WTC11 (cell line): ENCODE measurements at regions of chr19 and their contacts with region 1.

Region 1: GRCh38 chr19:40425450-40426287 is at the start of gene SERTAD1:
- DNase-seq: peak; percentile 100
- ATAC-seq: peak; percentile 89
- H3K4me3 Mint-ChIP-seq: peak within 1 kb of the TSS; percentile 91
- H3K27ac Mint-ChIP-seq: peak within 1 kb of the TSS; percentile 97
- H3K4me1 Mint-ChIP-seq: peaks cover 16% of the 10 kb centered on the region
- H3K27me3 Mint-ChIP-seq: peaks cover 3% of the 10 kb centered on the region; the same call in 1 of the 2 replicates
- CTCF ChIP-seq: peak; percentile 80
- total RNA-seq, gene SERTAD1: 6.8 to 8.6 TPM (median 7.4 TPM) in 3 replicates

Region 2: DNA sequence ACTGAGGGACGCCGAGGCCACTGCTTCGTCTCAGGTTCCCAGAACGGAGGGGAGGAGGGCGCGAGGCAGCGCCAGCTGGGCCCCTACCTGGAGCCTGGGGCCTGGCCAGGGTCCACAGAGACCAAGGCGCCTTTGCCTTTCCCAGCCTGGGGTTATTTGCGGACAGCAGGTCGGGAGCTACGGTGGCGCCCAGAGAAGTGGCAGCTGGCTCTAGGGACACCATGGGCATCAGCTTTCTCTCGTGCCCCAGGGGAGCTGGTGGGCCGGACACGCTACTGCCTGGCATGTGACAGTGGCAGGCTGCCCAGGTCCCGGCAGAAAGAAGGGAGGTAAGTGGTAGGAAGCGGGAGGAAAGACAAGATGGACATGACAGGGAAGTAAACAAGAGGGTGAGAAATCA is 159.6 kb before region 1 on chr19:
- CTCF ChIA-PET with region 1: no interaction called
- POLR2A ChIA-PET with region 1: no interaction called
- DNase-seq: no peak
- ATAC-seq: no peak
- H3K4me3 Mint-ChIP-seq: no peak overlapping the region
- H3K27ac Mint-ChIP-seq: no peak overlapping the region; the same call in 1 of the 2 replicates
- H3K4me1 Mint-ChIP-seq: peaks cover 20% of the 10 kb centered on the region
- H3K27me3 Mint-ChIP-seq: no peaks in the 10 kb centered on the region
- CTCF ChIP-seq: no peak

Region 3: DNA sequence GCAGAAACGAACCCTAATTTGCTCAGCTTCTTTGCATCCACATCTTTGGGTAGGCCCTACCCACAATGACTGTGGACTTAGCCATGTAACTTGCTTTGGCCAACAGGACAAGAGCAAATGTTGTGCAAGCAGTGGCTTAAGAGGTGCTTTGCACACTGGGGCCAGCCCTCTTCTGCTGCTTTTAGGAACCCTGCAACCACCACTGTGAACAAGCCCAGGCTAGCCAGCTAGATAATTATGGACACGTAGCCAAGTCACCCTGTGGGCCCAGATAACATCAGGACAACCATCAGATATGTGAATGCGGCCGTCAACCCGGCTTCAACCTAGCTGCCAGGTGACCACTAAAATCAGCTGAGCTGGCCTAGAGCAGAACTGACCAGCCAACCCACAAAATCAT is 94.6 kb before region 1 on chr19:
- CTCF ChIA-PET with region 1: no interaction called
- POLR2A ChIA-PET with region 1: no interaction called
- DNase-seq: no peak
- ATAC-seq: no peak
- H3K4me3 Mint-ChIP-seq: no peak overlapping the region
- H3K27ac Mint-ChIP-seq: no peak overlapping the region
- H3K4me1 Mint-ChIP-seq: no peaks in the 10 kb centered on the region
- H3K27me3 Mint-ChIP-seq: no peaks in the 10 kb centered on the region
- CTCF ChIP-seq: no peak

Region 4: GRCh38 chr19:40365613-40366401 is 59.9 kb before region 1 on chr19:
- CTCF ChIA-PET with region 1: interaction called, 21 read pairs
- POLR2A ChIA-PET with region 1: interaction called, 6 read pairs
- DNase-seq: peak; percentile 89
- ATAC-seq: peak; percentile 82
- H3K4me3 Mint-ChIP-seq: peak overlapping the region; percentile 65
- H3K27ac Mint-ChIP-seq: no peak overlapping the region
- H3K4me1 Mint-ChIP-seq: peaks cover 12% of the 10 kb centered on the region
- H3K27me3 Mint-ChIP-seq: peaks cover 5% of the 10 kb centered on the region; the same call in 1 of the 2 replicates
- CTCF ChIP-seq: no peak

Region 5: GRCh38 chr19:40394816-40395210 is 30.9 kb before region 1 on chr19:
- CTCF ChIA-PET with region 1: interaction called, 12 read pairs
- POLR2A ChIA-PET with region 1: interaction called, 3 read pairs
- DNase-seq: no peak
- ATAC-seq: no peak
- H3K4me3 Mint-ChIP-seq: no peak overlapping the region
- H3K27ac Mint-ChIP-seq: no peak overlapping the region
- H3K4me1 Mint-ChIP-seq: peaks cover 10% of the 10 kb centered on the region
- H3K27me3 Mint-ChIP-seq: peaks cover 28% of the 10 kb centered on the region
- CTCF ChIP-seq: no peak

Region 6: DNA sequence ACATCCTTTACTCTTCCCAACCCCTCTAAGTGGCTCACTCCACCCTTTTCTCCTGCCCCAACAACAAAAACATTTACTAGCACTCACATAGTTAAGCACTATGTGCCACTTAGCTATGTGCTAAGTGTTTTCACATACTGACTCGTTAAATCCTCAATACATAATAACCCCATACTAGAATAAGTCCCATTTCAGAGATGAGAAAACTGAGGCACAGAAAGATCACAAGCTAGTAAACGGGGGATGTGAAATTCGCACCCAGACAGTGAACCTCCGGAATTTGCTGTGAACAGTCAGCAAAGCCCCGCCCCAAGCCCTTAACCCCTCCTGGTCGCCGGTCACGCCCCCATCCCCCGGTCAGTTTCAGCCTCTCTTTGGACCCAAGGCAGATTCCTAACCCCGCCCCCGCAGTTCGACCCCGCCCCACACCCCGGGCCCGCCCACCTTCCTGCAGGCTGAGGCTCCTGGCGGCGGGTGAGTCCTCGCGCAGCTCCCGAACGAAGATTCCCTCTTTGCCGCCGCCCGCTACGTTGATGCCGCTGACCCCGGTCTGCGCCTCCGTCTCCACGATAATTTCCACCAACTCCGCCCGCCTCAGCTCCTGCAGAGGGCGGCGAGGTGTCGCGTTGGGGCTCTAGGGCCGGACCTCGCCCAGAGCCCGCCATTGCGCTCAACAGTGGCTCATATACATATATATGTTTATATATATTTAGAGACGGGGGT is 22.2 kb before region 1 on chr19:
- CTCF ChIA-PET with region 1: interaction called, 40 read pairs
- POLR2A ChIA-PET with region 1: interaction called, 10 read pairs
- DNase-seq: peak; percentile 99
- ATAC-seq: peak; percentile 79
- H3K4me3 Mint-ChIP-seq: peak overlapping the region; percentile 84
- H3K27ac Mint-ChIP-seq: peak overlapping the region; percentile 80
- H3K4me1 Mint-ChIP-seq: peaks cover 22% of the 10 kb centered on the region
- H3K27me3 Mint-ChIP-seq: peaks cover 21% of the 10 kb centered on the region
- CTCF ChIP-seq: no peak

Region 7: GRCh38 chr19:40413291-40413845 is 12.3 kb before region 1 on chr19 and contains the start of gene PRX:
- CTCF ChIA-PET with region 1: interaction called, 33 read pairs
- POLR2A ChIA-PET with region 1: interaction called, 11 read pairs
- DNase-seq: peak; percentile 88
- ATAC-seq: peak; percentile 71
- H3K4me3 Mint-ChIP-seq: peak within 1 kb of the TSS; percentile 62
- H3K27ac Mint-ChIP-seq: peak within 1 kb of the TSS; percentile 95
- H3K4me1 Mint-ChIP-seq: peaks cover 43% of the 10 kb centered on the region
- H3K27me3 Mint-ChIP-seq: no peaks in the 10 kb centered on the region
- CTCF ChIP-seq: no peak
- total RNA-seq, gene PRX: 8.2 to 8.4 TPM (median 8.3 TPM) in 3 replicates

Region 8: GRCh38 chr19:40444192-40445028 is 18.7 kb after region 1 on chr19 and contains the start of gene SERTAD3:
- CTCF ChIA-PET with region 1: interaction called, 46 read pairs
- POLR2A ChIA-PET with region 1: interaction called, 32 read pairs
- DNase-seq: peak; percentile 97
- ATAC-seq: peak; percentile 68
- H3K4me3 Mint-ChIP-seq: peak within 1 kb of the TSS; percentile 94
- H3K27ac Mint-ChIP-seq: peak within 1 kb of the TSS; percentile 99
- H3K4me1 Mint-ChIP-seq: peaks cover 27% of the 10 kb centered on the region
- H3K27me3 Mint-ChIP-seq: no peaks in the 10 kb centered on the region
- CTCF ChIP-seq: no peak
- total RNA-seq, gene SERTAD3: 31.9 to 34.6 TPM (median 33.6 TPM) in 3 replicates

Region 9: DNA sequence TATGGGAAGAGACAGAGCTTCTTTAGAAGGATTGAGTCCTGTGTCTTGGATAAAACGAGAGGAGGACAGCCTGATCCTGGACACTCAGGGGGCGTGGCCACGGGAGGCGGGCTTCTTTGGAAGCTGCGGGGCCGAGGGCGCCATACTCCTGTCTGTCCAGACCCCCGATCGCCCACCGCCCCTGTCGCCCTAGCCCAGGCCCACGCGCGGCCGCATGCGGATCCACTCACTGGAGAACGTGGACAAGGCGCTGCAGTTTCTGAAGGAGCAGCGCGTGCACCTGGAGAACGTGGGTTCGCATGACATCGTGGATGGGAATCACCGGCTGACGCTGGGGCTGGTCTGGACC is 64.2 kb after region 1 on chr19:
- CTCF ChIA-PET with region 1: interaction called, 12 read pairs
- POLR2A ChIA-PET with region 1: interaction called, 4 read pairs
- DNase-seq: no peak
- ATAC-seq: no peak
- H3K4me3 Mint-ChIP-seq: no peak overlapping the region
- H3K27ac Mint-ChIP-seq: no peak overlapping the region
- H3K4me1 Mint-ChIP-seq: peaks cover 5% of the 10 kb centered on the region
- H3K27me3 Mint-ChIP-seq: peaks cover 67% of the 10 kb centered on the region
- CTCF ChIP-seq: no peak